ENCODE measurements at regions of chr1 and their contacts with region 1.

Region 1: GRCh38 chr1:97632075-97632474 is 288.8 kb downstream of the DPYD start:
- DNase-seq: no peak
- ATAC-seq: no peak
- H3K4me3 ChIP-seq: no peak overlapping the region
- H3K4me3 Mint-ChIP-seq: no peak overlapping the region
- H3K27ac ChIP-seq: no peak overlapping the region
- H3K27ac Mint-ChIP-seq: no peak overlapping the region
- H3K4me1 ChIP-seq: no peaks in the 10 kb centered on the region
- H3K4me1 Mint-ChIP-seq: peaks cover 0 to 27% (median 20%) of the 10 kb centered on the region in 7 donors
- H3K27me3 ChIP-seq: no peaks in the 10 kb centered on the region
- H3K27me3 Mint-ChIP-seq: no peaks in the 10 kb centered on the region

Region 2: GRCh38 chr1:97489834-97490233 is 142.2 kb before region 1 on chr1:
- CTCF ChIA-PET with region 1: no interaction called
- POLR2A ChIA-PET with region 1: no interaction called
- intact Hi-C with region 1: no loop called
- DNase-seq: no peak
- ATAC-seq: no peak
- H3K4me3 ChIP-seq: no peak overlapping the region
- H3K4me3 Mint-ChIP-seq: no peak overlapping the region
- H3K27ac ChIP-seq: no peak overlapping the region
- H3K27ac Mint-ChIP-seq: no peak overlapping the region
- H3K4me1 ChIP-seq: no peaks in the 10 kb centered on the region
- H3K4me1 Mint-ChIP-seq: peaks cover 0 to 6% (median 0%) of the 10 kb centered on the region in 7 donors
- H3K27me3 ChIP-seq: no peaks in the 10 kb centered on the region
- H3K27me3 Mint-ChIP-seq: no peaks in the 10 kb centered on the region

Region 3: DNA sequence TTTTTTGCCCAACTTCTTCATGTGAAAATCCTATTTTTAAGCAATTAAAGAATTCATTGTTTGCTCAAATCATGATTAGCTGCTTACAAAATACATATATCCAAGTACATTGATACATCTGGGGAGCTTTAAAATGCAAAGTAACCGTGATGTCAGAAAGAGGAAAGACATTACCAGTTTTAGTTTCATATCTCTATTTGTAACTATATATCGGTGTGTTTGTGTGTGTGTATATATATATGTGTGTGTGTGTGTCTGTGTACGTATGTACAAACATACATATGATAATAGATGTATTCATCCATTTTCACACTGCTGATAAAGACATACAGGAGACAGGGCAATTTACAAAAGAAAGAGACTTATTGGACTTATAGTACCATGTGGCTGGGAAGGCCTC is 21.3 kb before region 1 on chr1:
- CTCF ChIA-PET with region 1: no interaction called
- POLR2A ChIA-PET with region 1: no interaction called
- intact Hi-C with region 1: loop called in 1 of 2 experiments (anchors 2 kb)
- DNase-seq: no peak
- ATAC-seq: no peak
- H3K4me3 ChIP-seq: no peak overlapping the region
- H3K4me3 Mint-ChIP-seq: no peak overlapping the region
- H3K27ac ChIP-seq: no peak overlapping the region
- H3K27ac Mint-ChIP-seq: no peak overlapping the region
- H3K4me1 ChIP-seq: no peaks in the 10 kb centered on the region
- H3K4me1 Mint-ChIP-seq: peaks cover 0 to 9% (median 0%) of the 10 kb centered on the region in 7 donors
- H3K27me3 ChIP-seq: no peaks in the 10 kb centered on the region
- H3K27me3 Mint-ChIP-seq: no peaks in the 10 kb centered on the region

Region 4: GRCh38 chr1:97758541-97759057 is 126.5 kb after region 1 on chr1:
- CTCF ChIA-PET with region 1: no interaction called
- POLR2A ChIA-PET with region 1: no interaction called
- intact Hi-C with region 1: no loop called
- DNase-seq: no peak
- ATAC-seq: no peak
- H3K4me3 ChIP-seq: no peak overlapping the region
- H3K4me3 Mint-ChIP-seq: no peak overlapping the region
- H3K27ac ChIP-seq: no peak overlapping the region
- H3K27ac Mint-ChIP-seq: no peak overlapping the region
- H3K4me1 ChIP-seq: no peaks in the 10 kb centered on the region
- H3K4me1 Mint-ChIP-seq: peaks cover 0 to 9% (median 3%) of the 10 kb centered on the region in 7 donors
- H3K27me3 ChIP-seq: no peaks in the 10 kb centered on the region
- H3K27me3 Mint-ChIP-seq: no peaks in the 10 kb centered on the region